Head of caudate nucleus (tissue), 42 donors: ENCODE measurements at regions of chr12 and their contacts with region 1.

Region 1: DNA sequence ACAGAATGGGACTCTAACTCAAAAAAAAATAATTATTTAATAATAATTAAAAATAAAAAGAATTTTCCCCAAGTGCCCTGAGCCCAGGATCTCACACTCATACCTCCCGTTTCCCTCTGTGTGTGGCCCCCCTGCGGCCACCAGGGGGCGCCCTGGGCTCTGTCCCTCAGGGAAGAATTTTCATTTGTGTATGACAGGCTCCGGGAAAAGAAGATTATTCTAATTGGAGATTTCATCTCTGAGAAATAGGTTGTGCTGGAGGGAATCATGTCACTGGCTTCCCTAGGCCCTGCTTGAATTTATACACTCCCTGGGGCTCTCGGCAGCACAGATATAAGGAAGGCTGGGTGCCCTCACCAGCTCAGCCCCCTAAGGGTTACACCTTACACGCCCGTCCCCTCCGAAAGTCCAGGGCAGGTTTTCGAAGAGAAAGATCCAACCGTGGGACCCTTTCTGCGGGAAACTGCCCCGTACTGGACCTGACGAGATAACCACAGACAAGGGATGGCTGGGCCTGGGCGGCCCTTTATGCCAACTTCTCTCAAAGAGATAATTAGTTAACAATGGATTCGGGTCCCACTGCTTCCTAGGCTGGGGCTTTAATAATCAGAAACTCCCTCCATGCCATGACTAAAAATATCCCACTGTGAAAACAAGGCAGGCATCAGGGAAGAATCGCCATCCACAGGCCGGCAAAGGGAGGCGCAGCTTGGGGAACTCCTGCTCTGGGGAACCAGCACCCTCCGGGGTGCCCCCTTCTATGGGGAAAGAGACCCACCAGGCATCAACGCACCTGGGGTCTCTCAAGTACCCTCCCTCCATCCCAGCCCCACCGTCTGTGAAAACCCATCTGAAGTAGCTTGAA is 80.7 kb downstream of the KDM2B start:
- DNase-seq: peak; percentile 40 to 95 (median 87)

Region 2: GRCh38 chr12:121443193-121443870 is 56.8 kb before region 1 on chr12:
- intact Hi-C with region 1: no loop called
- DNase-seq: peak; percentile 74 to 96 (median 90)

Region 3: GRCh38 chr12:121536899-121537813 is 37.0 kb after region 1 on chr12:
- intact Hi-C with region 1: loop called (anchors 5 kb)
- DNase-seq: peak; percentile 39 to 91 (median 81)

Region 4: DNA sequence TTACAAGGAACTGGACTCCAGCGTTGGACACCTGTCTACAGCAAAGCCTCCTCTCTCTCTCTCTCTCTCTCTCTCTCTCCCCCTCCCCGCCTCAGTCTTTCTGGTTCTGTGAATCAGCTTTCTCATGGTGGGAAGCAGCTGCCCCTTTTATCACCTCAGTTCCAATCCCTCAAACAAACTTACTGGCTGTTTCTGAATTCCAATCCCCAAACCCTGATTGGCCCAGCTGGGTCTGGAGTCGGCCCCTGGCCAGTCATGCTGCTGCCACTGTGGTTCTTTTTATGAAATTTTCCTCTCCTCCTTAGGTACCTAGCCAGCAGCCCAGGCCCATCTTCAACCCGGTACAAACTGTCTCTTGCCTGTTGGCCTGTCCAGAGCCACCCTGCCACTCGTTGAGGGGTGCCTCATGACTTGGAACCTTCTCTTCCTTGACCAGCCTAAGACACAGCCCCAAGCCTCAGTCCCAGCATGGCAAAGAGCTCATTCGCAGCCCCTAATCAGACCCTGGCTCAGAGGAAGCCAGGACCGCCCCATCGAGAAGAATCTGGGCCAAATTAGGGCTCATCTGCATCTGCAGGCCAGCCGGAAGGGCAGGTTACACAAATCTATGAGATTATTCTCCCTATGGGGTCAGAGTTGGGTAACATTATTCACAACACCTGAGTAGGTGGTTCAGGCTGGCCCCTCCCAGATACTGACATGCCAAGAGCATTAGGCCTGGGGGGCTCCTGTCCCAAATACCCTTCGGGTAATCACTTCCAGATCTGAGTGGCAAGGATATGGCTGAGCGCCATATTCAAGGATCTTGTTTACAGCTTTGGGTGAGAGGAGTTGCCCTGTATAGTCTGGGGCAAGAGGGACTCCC is 178.8 kb after region 1 on chr12:
- intact Hi-C with region 1: loop called (anchors 5 kb)
- DNase-seq: no peak

Region 5: GRCh38 chr12:121911824-121912585 is 411.8 kb after region 1 on chr12:
- intact Hi-C with region 1: no loop called
- DNase-seq: no peak